ENCODE measurements at regions of chr3 and their contacts with region 1.

Region 1: DNA sequence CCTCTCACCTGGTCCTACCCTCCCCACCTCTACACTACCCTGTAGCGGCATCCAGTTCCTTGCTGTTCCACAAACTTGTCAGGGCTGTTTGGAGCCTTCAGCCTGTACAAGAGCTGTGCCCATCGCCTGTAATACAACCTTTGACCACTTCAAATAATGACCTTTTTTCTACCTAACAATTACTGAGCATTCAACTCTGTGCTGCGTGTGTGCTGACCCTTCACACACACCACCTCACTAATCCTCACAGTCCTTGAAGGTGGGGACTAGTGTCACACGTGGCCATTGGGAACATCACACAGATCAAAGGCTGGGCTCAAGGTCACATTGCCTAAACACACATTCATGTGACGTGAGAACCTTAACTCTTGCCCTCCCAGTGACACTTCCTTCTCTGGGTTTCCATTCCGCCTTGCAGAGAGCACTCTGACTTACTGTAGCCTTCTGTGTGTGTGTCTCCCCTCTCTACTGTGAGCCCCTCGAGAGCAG is 3.1 kb downstream of the C3orf20 start:
- DNase-seq: no peak
- H3K4me3 ChIP-seq: no peak overlapping the region
- H3K27ac ChIP-seq: no peak overlapping the region
- H3K4me1 ChIP-seq: no peaks in the 10 kb centered on the region
- H3K27me3 ChIP-seq: no peaks in the 10 kb centered on the region
- CTCF ChIP-seq: no peak

Region 2: GRCh38 chr3:14602006-14602803 is 75.9 kb before region 1 on chr3:
- intact Hi-C with region 1: no loop called
- DNase-seq: no peak
- H3K4me3 ChIP-seq: peak overlapping the region; percentile 54
- H3K27ac ChIP-seq: no peak overlapping the region
- H3K4me1 ChIP-seq: peaks cover 17% of the 10 kb centered on the region
- H3K27me3 ChIP-seq: peaks cover 86% of the 10 kb centered on the region
- CTCF ChIP-seq: no peak

Region 3: GRCh38 chr3:14780927-14781507 is 103.0 kb after region 1 on chr3:
- intact Hi-C with region 1: loop called (anchors 10 kb)
- DNase-seq: peak; percentile 64
- H3K4me3 ChIP-seq: no peak overlapping the region
- H3K27ac ChIP-seq: no peak overlapping the region
- H3K4me1 ChIP-seq: peaks cover 18% of the 10 kb centered on the region
- H3K27me3 ChIP-seq: peaks cover 22% of the 10 kb centered on the region
- CTCF ChIP-seq: peak; percentile 73

Region 4: GRCh38 chr3:14913926-14914778 is 236.1 kb after region 1 on chr3:
- intact Hi-C with region 1: loop called (anchors 5 kb)
- DNase-seq: no peak
- H3K4me3 ChIP-seq: no peak overlapping the region
- H3K27ac ChIP-seq: no peak overlapping the region
- H3K4me1 ChIP-seq: peaks cover 9% of the 10 kb centered on the region
- H3K27me3 ChIP-seq: no peaks in the 10 kb centered on the region
- CTCF ChIP-seq: no peak

Measured in left ventricle myocardium inferior (tissue), 1 donor.